Naive thymus-derived CD4-positive, alpha-beta T cell (primary cell): ENCODE measurements at regions of chr10 and their contacts with region 1.

Region 1: DNA sequence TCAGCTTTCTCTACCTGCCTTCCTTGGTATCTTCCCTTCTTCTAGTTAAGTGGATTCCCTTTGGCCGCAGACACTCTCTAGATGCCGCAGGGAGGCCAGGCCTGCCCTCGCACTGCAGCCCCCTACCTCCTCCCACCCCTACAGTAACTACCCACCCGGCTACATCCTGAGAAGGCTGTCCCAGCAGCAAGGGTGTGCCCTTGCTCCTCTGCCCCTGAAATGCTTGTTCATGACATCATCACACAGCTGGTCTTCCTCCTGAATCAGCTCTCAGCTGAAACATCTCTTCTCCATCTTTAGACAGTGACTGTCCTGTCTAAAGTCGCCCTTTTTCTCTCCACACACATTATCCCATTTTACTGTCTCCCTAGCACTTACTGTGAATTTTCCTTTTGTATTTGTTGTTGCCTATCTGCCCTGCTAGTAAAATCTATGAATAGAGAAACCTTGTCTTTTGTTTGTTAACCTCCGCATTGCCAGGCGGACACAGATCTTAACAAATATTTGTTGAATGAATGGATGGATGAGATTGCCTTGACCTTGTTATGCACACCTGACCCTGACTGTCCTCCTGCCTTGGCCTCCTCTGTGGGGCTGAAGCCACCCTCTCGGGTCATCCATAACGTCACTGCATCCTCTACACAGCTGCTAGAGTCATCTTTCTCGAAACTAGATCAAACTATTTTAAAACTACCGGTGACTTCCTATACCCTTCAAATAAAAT is 108.9 kb upstream of the GATA3 start:
- DNase-seq: no peak
- ATAC-seq: no peak
- H3K4me3 ChIP-seq: no peak overlapping the region
- H3K4me3 Mint-ChIP-seq: no peak overlapping the region
- H3K27ac ChIP-seq: no peak overlapping the region
- H3K27ac Mint-ChIP-seq: peak overlapping the region in 4 of 9 donors; percentile 1 to 13 (median 7)
- H3K4me1 ChIP-seq: no peaks in the 10 kb centered on the region
- H3K4me1 Mint-ChIP-seq: peaks cover 14 to 73% (median 60%) of the 10 kb centered on the region in 7 donors
- H3K27me3 ChIP-seq: no peaks in the 10 kb centered on the region
- H3K27me3 Mint-ChIP-seq: no peaks in the 10 kb centered on the region

Region 2: DNA sequence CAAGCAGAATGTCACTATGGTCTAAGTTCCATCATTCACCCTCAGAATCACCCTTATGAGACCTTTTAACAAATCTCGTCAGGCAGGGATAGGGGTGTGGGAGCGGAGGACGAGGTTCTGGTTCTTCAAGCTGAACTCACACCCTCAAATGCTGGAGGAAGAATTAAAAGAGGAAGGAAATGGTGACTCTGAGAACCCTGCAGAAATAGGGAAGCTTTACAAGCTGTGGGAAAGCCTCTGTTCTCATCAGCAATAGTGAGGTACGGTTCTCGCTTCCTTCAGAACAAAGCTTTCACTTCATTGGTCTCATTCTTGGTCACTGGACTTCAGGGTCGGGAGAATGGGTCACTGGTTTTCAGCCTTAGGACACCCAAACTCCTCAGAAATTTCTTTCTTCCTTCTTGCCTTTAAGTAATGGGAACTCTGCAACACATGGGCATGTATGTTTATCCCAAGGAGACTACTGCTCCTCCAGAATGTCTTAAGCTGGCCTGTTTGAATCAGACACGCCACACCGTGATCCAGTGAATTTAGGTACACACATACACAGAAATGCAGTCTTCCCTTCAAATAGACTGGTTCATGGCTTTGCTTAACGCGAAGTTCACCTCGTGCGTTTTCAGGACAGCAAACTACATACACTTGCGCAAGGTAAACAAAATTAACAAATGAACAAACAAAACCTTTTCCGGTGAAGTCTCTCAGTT is 760.8 kb before region 1 on chr10:
- CTCF ChIA-PET with region 1: no interaction called
- POLR2A ChIA-PET with region 1: no interaction called
- intact Hi-C with region 1: loop called in 1 of 2 experiments (anchors 5 kb)
- DNase-seq: no peak
- ATAC-seq: peak; percentile 80
- H3K4me3 ChIP-seq: no peak overlapping the region
- H3K4me3 Mint-ChIP-seq: peak overlapping the region; percentile 8 to 77 (median 55)
- H3K27ac ChIP-seq: no peak overlapping the region
- H3K27ac Mint-ChIP-seq: peak overlapping the region; percentile 35 to 94 (median 73)
- H3K4me1 ChIP-seq: peaks cover 0 to 23% of the 10 kb centered on the region in 2 donors
- H3K4me1 Mint-ChIP-seq: peaks cover 17 to 57% (median 42%) of the 10 kb centered on the region in 7 donors
- H3K27me3 ChIP-seq: no peaks in the 10 kb centered on the region
- H3K27me3 Mint-ChIP-seq: no peaks in the 10 kb centered on the region

Region 3: DNA sequence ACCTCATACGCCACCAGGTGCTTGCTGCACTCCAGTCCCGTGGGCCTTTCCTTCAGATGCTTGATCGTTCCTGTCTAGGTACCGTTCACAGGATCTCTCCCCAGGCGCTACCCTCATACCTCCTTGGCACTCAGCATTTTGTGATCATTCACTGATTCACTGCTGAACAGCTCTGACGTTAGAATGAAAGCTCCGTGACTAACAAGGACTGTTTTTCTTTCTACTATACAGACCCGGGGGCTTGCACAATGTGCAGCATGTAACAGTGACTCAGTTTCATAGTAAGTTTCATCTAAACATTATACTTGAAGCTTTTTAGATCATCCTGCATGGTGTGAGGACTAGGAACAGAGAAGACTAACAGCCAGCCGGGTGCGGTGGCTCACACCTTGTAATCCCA is 178.4 kb before region 1 on chr10:
- CTCF ChIA-PET with region 1: no interaction called
- POLR2A ChIA-PET with region 1: no interaction called
- intact Hi-C with region 1: loop called in 1 of 2 experiments (anchors 10 kb)
- DNase-seq: no peak
- ATAC-seq: no peak
- H3K4me3 ChIP-seq: no peak overlapping the region
- H3K4me3 Mint-ChIP-seq: no peak overlapping the region
- H3K27ac ChIP-seq: no peak overlapping the region
- H3K27ac Mint-ChIP-seq: no peak overlapping the region
- H3K4me1 ChIP-seq: no peaks in the 10 kb centered on the region
- H3K4me1 Mint-ChIP-seq: peaks cover 0 to 7% (median 0%) of the 10 kb centered on the region in 7 donors
- H3K27me3 ChIP-seq: no peaks in the 10 kb centered on the region
- H3K27me3 Mint-ChIP-seq: no peaks in the 10 kb centered on the region